ENCODE measurements at regions of chr6 and their contacts with region 1.

Region 1: DNA sequence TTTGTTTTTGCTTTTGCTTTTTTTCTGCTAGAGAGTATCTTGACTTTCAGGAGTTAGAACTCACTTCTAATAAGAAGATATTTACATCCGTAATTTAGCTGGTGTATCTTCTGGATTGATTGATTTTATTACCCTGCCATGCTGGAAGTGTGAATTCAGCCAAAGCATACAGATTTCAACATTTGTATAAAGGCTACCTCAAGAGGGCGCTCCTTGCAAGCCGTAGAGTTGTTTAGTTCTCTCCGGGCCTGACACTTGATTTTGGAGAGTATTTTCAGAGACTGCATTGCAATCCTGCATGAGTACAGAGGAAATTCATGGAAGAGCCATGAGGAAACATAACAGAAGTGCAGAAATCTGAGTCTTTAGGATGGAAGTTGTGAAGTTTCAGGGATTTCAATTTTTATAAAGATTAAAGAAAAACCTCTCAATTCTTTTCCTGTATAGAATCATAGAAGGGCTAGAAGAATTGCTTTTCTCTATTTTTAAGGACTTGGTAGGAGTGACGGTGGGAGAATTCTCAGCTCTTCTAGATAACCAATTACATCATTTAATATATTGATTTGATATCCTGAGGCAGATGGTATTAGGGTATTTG is 66.7 kb upstream of the TIAM2 start:
- DNase-seq: peak in 2 of 3 donors; percentile 16 to 23
- H3K4me3 ChIP-seq: no peak overlapping the region
- H3K4me3 Mint-ChIP-seq: no peak overlapping the region
- H3K27ac ChIP-seq: no peak overlapping the region
- H3K27ac Mint-ChIP-seq: no peak overlapping the region
- H3K4me1 ChIP-seq: no peaks in the 10 kb centered on the region
- H3K4me1 Mint-ChIP-seq: peaks cover 3% of the 10 kb centered on the region
- H3K27me3 ChIP-seq: no peaks in the 10 kb centered on the region
- H3K27me3 Mint-ChIP-seq: peaks cover 0 to 5% (median 0%) of the 10 kb centered on the region in 3 donors
- CTCF ChIP-seq: peak; percentile 81

Region 2: DNA sequence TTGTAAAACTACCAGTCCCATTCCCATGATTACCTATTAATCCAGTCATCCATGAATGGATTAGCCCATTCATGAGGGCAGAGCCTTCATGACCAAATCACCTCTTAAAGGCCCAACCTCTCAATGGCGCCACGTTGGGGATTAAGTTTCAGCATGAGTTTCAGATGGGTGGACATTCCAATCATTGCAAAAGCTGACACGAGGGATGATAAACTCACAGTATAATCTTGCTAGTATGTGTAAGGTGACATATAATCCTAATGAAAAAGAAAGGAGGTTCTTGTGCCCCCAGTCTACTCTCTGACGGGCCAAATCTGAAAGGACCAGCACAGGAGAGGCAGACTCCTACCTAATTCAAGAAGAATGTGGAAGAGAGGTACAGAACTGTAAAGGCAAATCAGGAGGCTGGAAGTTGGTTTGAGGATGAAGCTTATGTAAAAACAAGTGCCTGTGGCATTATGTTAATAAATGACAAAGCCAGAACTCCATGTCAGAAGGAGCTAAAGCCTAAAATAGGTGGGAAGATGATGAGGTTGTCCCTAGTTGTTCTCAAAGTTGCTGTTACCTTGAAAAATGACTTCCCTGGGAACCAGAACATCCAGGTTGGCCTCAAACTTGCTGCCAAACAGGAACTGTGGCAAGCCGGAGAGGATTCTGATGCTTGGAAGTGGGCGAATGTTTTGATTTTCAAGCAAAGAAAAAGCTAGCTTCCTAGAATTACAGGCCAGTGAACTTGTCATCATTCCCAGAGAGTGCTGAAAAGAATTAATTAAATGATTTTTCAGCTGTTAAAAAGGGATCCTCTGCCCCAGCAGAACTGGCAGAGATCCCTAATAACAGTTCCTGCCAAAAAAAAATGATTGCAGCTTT is 39.8 kb before region 1 on chr6:
- intact Hi-C with region 1: no loop called
- DNase-seq: no peak
- H3K4me3 ChIP-seq: no peak overlapping the region
- H3K4me3 Mint-ChIP-seq: no peak overlapping the region
- H3K27ac ChIP-seq: no peak overlapping the region
- H3K27ac Mint-ChIP-seq: peak overlapping the region in 2 of 7 donors; percentile 38 to 61
- H3K4me1 ChIP-seq: no peaks in the 10 kb centered on the region
- H3K4me1 Mint-ChIP-seq: no peaks in the 10 kb centered on the region
- H3K27me3 ChIP-seq: no peaks in the 10 kb centered on the region
- H3K27me3 Mint-ChIP-seq: no peaks in the 10 kb centered on the region
- CTCF ChIP-seq: no peak

Region 3: DNA sequence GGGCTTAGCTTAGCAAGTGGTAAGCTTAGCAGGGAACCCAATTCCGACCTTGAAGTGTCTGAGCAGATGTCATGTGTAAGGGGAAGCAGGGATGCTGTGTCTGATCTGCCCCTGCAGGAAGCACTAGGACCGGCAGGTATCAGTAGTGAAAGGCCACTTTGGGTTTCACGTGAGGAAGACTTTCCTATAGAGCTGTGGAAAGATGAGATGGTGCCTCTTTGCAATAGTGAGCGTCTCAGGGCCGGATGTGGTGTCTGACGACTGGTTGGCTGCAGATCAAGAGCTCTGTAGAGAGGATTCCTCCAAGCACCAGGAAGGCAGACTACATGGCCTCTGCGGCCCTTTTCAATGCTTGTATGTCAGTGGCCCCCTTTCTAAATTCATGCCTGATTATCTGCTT is 165.0 kb after region 1 on chr6:
- intact Hi-C with region 1: no loop called
- DNase-seq: no peak
- H3K4me3 ChIP-seq: no peak overlapping the region
- H3K4me3 Mint-ChIP-seq: no peak overlapping the region
- H3K27ac ChIP-seq: no peak overlapping the region
- H3K27ac Mint-ChIP-seq: no peak overlapping the region
- H3K4me1 ChIP-seq: no peaks in the 10 kb centered on the region
- H3K4me1 Mint-ChIP-seq: peaks cover 6% of the 10 kb centered on the region
- H3K27me3 ChIP-seq: no peaks in the 10 kb centered on the region
- H3K27me3 Mint-ChIP-seq: peaks cover 0 to 4% (median 2%) of the 10 kb centered on the region in 3 donors
- CTCF ChIP-seq: no peak

Region 4: GRCh38 chr6:155264693-155265320 is 336.4 kb after region 1 on chr6:
- intact Hi-C with region 1: loop called in 1 of 2 experiments (anchors 10 kb)
- DNase-seq: no peak
- H3K4me3 ChIP-seq: no peak overlapping the region
- H3K4me3 Mint-ChIP-seq: no peak overlapping the region
- H3K27ac ChIP-seq: no peak overlapping the region
- H3K27ac Mint-ChIP-seq: no peak overlapping the region
- H3K4me1 ChIP-seq: no peaks in the 10 kb centered on the region
- H3K4me1 Mint-ChIP-seq: no peaks in the 10 kb centered on the region
- H3K27me3 ChIP-seq: no peaks in the 10 kb centered on the region
- H3K27me3 Mint-ChIP-seq: peaks cover 0 to 3% (median 1%) of the 10 kb centered on the region in 3 donors
- CTCF ChIP-seq: no peak

Measured in CD14-positive monocyte (primary cell).